ENCODE measurements at regions of chr15 and their contacts with region 1.

Region 1: DNA sequence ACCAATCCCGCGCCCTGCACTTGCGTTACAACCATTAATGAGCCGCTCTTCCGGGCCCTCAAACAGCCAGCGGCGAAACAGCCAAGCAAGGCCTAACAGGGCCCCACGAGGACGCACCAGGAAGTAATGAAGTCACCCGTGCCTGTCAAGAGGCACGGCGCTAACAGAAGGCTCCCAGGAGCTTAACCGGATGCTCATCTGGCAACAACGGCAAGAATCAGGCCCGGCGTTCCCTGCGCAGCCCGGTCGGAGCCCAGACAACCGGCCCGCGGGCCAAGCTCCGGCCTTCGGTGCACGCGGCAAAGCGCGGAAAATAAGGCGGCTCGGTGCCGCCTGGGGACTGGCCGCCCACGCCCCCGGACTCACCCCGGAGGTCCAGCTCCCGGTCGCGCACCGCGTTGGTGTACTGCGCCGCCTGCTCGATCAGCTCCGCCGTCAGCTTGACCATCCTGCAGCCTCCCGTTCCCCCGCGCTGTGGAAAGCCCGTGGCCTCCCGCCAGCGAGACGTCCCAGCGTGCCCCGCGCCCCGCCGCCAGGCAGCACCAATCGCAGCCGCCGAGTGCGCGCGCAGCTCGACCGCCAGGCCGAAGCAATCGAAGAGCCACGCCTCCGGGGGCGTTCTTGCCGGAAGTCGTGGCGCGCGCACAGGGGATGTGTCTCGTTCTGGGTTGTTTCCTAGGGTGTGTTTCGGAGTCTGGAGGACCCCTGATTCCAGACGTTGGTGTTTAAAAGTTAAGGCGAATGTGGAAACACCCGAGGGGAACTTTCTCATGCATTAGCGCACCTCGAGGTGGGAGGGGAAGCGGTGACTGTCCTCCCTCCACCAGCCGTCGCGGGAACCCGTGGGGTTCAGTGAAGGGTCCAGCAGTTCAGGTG is at the start of gene SNRPA1:
- DNase-seq: peak; percentile 86
- H3K4me3 ChIP-seq: peak within 1 kb of the TSS; percentile 73 to 94 (median 82)
- H3K27ac ChIP-seq: peak within 1 kb of the TSS; percentile 91 to 99 (median 94)
- H3K4me1 ChIP-seq: peaks cover 6 to 48% (median 25%) of the 10 kb centered on the region in 3 donors
- H3K27me3 ChIP-seq: no peaks in the 10 kb centered on the region
- CTCF ChIP-seq: peak in 2 of 6 experiments; percentile 15 to 54
- POLR2A ChIP-seq: peak in 2 of 4 donors; percentile 66 to 93
- total RNA-seq, gene SNRPA1: 29.7 to 57.1 (median 47.5) TPM

Region 2: DNA sequence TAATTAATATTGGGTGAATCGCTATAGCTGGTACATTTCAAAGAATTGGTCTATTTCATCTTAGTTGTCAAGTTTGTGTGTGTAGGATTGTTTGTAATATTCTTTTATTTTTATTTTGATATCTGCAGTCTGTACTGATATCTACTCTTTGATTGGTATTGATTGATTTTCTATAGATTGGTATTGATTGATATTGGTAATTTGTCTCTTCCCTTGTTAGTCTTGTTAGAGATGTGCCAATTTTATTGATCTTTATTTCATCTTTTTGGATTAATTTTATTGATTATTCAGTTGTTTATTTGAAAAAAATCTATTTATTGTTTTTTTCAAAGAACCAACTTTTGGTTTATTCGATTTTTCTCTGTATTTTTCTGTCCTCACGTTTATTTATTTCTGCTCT is 295.8 kb after region 1 on chr15:
- intact Hi-C with region 1: no loop called
- DNase-seq: no peak
- H3K4me3 ChIP-seq: no peak overlapping the region
- H3K27ac ChIP-seq: no peak overlapping the region
- H3K4me1 ChIP-seq: no peaks in the 10 kb centered on the region
- H3K27me3 ChIP-seq: no peaks in the 10 kb centered on the region
- CTCF ChIP-seq: no peak
- POLR2A ChIP-seq: no peak

Region 3: DNA sequence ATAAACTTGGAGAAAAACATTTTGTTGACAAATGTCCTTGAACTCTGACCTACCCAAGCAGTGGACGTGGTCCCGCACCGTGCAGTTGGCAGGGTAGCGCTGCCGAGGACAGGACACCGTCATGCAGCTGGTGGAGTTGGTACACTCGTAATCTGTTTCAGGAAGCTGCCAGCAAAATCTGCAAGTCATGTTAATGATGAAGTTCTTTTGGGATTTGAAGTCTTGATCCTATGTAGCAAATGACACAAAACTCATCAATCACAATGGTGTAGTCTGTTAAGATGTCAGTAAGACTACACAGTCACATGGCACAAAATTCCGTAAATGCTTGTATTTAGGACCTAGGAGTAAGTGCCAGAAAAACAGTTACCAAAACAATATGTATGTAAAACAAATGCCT is 351.7 kb after region 1 on chr15:
- intact Hi-C with region 1: loop called (anchors 5 kb)
- DNase-seq: no peak
- H3K4me3 ChIP-seq: no peak overlapping the region
- H3K27ac ChIP-seq: no peak overlapping the region
- H3K4me1 ChIP-seq: peaks cover 11 to 50% (median 18%) of the 10 kb centered on the region in 3 donors
- H3K27me3 ChIP-seq: no peaks in the 10 kb centered on the region
- CTCF ChIP-seq: no peak
- POLR2A ChIP-seq: no peak